CD8-positive, alpha-beta memory T cell (primary cell): ENCODE measurements at regions of chr20 and their contacts with region 1.

Region 1: GRCh38 chr20:35179292-35180212 is 7.7 kb downstream of the PROCR start:
- DNase-seq: no peak
- H3K4me3 ChIP-seq: no peak overlapping the region
- H3K4me3 Mint-ChIP-seq: no peak overlapping the region
- H3K27ac ChIP-seq: no peak overlapping the region
- H3K27ac Mint-ChIP-seq: no peak overlapping the region
- H3K4me1 ChIP-seq: no peaks in the 10 kb centered on the region
- H3K4me1 Mint-ChIP-seq: no peaks in the 10 kb centered on the region
- H3K27me3 ChIP-seq: no peaks in the 10 kb centered on the region
- H3K27me3 Mint-ChIP-seq: peaks cover 0 to 2% of the 10 kb centered on the region in 2 donors

Region 2: GRCh38 chr20:34849778-34850177 is 329.8 kb before region 1 on chr20:
- CTCF ChIA-PET with region 1: no interaction called
- POLR2A ChIA-PET with region 1: interaction called, 13 read pairs
- DNase-seq: no peak
- H3K4me3 ChIP-seq: no peak overlapping the region
- H3K4me3 Mint-ChIP-seq: no peak overlapping the region
- H3K27ac ChIP-seq: no peak overlapping the region
- H3K27ac Mint-ChIP-seq: no peak overlapping the region
- H3K4me1 ChIP-seq: no peaks in the 10 kb centered on the region
- H3K4me1 Mint-ChIP-seq: no peaks in the 10 kb centered on the region
- H3K27me3 ChIP-seq: no peaks in the 10 kb centered on the region
- H3K27me3 Mint-ChIP-seq: no peaks in the 10 kb centered on the region

Region 3: DNA sequence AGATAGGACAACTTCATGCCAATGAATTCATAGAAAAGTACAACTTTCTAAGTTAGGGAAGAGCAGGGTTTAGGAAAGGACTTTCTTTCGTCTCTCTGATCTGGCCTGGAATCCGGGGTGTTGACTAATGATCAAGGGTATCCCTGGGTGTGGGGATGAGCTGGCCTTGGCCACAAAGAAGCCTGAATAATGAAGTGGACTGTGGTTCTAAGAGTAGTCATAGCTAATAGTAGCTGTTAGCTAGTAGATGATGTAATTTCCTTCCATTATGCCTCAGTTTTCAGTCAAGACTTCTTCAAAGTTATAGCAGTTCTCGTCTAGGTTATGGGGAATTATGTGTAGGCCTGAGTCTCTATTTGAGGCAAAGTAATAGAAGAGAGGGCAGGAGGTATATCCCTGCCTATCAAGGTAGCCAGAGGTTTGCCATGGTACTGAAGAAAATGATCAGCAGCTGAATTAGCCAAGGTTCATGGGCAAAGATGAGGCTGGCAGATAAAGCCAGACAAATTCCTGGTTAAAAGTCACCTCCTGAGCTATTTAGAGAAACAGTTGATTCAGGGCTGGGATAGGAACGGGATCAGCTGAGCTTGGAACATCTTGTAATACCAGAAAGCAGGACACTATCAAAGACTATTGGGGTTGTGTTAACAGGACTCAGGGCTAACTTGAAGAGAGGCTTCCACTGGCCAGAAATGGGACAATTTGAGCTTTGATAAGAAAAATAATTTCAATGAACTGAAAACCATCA is 68.2 kb before region 1 on chr20:
- CTCF ChIA-PET with region 1: no interaction called
- POLR2A ChIA-PET with region 1: no interaction called
- DNase-seq: no peak
- H3K4me3 ChIP-seq: no peak overlapping the region
- H3K4me3 Mint-ChIP-seq: no peak overlapping the region
- H3K27ac ChIP-seq: no peak overlapping the region
- H3K27ac Mint-ChIP-seq: peak overlapping the region in 5 of 8 donors; percentile 13 to 72 (median 59)
- H3K4me1 ChIP-seq: no peaks in the 10 kb centered on the region
- H3K4me1 Mint-ChIP-seq: no peaks in the 10 kb centered on the region
- H3K27me3 ChIP-seq: no peaks in the 10 kb centered on the region
- H3K27me3 Mint-ChIP-seq: no peaks in the 10 kb centered on the region

Region 4: GRCh38 chr20:35151736-35152135 is 27.8 kb before region 1 on chr20:
- CTCF ChIA-PET with region 1: no interaction called
- POLR2A ChIA-PET with region 1: no interaction called
- DNase-seq: no peak
- H3K4me3 ChIP-seq: no peak overlapping the region
- H3K4me3 Mint-ChIP-seq: no peak overlapping the region
- H3K27ac ChIP-seq: no peak overlapping the region
- H3K27ac Mint-ChIP-seq: peak overlapping the region in 1 of 8 donors; percentile 11
- H3K4me1 ChIP-seq: peaks cover 8% of the 10 kb centered on the region
- H3K4me1 Mint-ChIP-seq: peaks cover 17 to 20% (median 20%) of the 10 kb centered on the region in 3 donors
- H3K27me3 ChIP-seq: no peaks in the 10 kb centered on the region
- H3K27me3 Mint-ChIP-seq: no peaks in the 10 kb centered on the region